Activated CD4-positive, alpha-beta memory T cell treated with anti-CD3 and anti-CD28 coated beads for 36 hours (primary cell): ENCODE measurements at regions of chr20 and their contacts with region 1.

Region 1: GRCh38 chr20:40741507-40742106 is 52.6 kb upstream of the MAFB start:
- DNase-seq: peak; percentile 58
- H3K4me3 Mint-ChIP-seq: no peak overlapping the region
- H3K27ac Mint-ChIP-seq: no peak overlapping the region
- H3K4me1 Mint-ChIP-seq: no peaks in the 10 kb centered on the region
- H3K27me3 Mint-ChIP-seq: no peaks in the 10 kb centered on the region

Region 2: GRCh38 chr20:40668449-40669228 is 73.0 kb before region 1 on chr20:
- CTCF ChIA-PET with region 1: no interaction called
- POLR2A ChIA-PET with region 1: no interaction called
- intact Hi-C with region 1: no loop called
- DNase-seq: no peak
- H3K4me3 Mint-ChIP-seq: no peak overlapping the region
- H3K27ac Mint-ChIP-seq: no peak overlapping the region
- H3K4me1 Mint-ChIP-seq: no peaks in the 10 kb centered on the region
- H3K27me3 Mint-ChIP-seq: peaks cover 4% of the 10 kb centered on the region

Region 3: GRCh38 chr20:40706977-40707582 is 34.5 kb before region 1 on chr20:
- CTCF ChIA-PET with region 1: interaction called, 19 read pairs
- POLR2A ChIA-PET with region 1: no interaction called
- intact Hi-C with region 1: no loop called
- DNase-seq: no peak
- H3K4me3 Mint-ChIP-seq: no peak overlapping the region
- H3K27ac Mint-ChIP-seq: no peak overlapping the region
- H3K4me1 Mint-ChIP-seq: no peaks in the 10 kb centered on the region
- H3K27me3 Mint-ChIP-seq: peaks cover 3% of the 10 kb centered on the region

Region 4: DNA sequence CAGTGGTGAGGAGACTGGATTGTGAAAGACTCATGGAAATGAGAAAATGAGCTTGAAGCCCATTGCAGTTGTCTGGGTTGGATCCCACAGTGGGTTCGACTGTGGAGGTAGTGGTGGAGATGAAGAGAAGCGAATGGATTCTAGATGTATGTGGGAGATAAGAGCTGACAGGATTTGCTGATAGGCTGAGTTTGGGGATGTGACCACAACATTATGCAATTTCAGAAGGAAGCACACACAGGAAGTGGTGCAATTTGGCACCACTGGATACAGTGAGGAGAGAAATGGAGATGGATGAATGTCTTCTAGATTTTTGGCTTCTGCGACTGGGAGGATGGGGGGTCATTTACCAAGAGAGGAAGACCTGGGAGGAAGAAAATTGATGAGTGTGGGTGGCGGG is 11.9 kb after region 1 on chr20:
- CTCF ChIA-PET with region 1: interaction called, 11 read pairs
- POLR2A ChIA-PET with region 1: no interaction called
- intact Hi-C with region 1: no loop called
- DNase-seq: no peak
- H3K4me3 Mint-ChIP-seq: no peak overlapping the region
- H3K27ac Mint-ChIP-seq: no peak overlapping the region
- H3K4me1 Mint-ChIP-seq: peaks cover 28% of the 10 kb centered on the region
- H3K27me3 Mint-ChIP-seq: no peaks in the 10 kb centered on the region

Region 5: GRCh38 chr20:40945754-40946450 is 204.3 kb after region 1 on chr20:
- CTCF ChIA-PET with region 1: interaction called, 10 read pairs
- POLR2A ChIA-PET with region 1: no interaction called
- intact Hi-C with region 1: no loop called
- DNase-seq: peak; percentile 35
- H3K4me3 Mint-ChIP-seq: no peak overlapping the region
- H3K27ac Mint-ChIP-seq: no peak overlapping the region
- H3K4me1 Mint-ChIP-seq: no peaks in the 10 kb centered on the region
- H3K27me3 Mint-ChIP-seq: peaks cover 14% of the 10 kb centered on the region